Psoas muscle (tissue), 8 donors: ENCODE measurements at regions of chr2 and their contacts with region 1.

Region 1: GRCh38 chr2:134118279-134119116 is 135.4 kb upstream of the MGAT5 start:
- DNase-seq: peak; percentile 79 to 87
- ATAC-seq: peak; percentile 74 to 85 (median 81)
- H3K4me3 ChIP-seq: no peak overlapping the region
- H3K27ac ChIP-seq: no peak overlapping the region
- H3K4me1 ChIP-seq: peaks cover 17% of the 10 kb centered on the region
- H3K27me3 ChIP-seq: peaks cover 0 to 2% (median 0%) of the 10 kb centered on the region in 3 donors
- CTCF ChIP-seq: peak; percentile 83

Region 2: GRCh38 chr2:133886735-133887660 is 231.5 kb before region 1 on chr2:
- intact Hi-C with region 1: loop called in 1 of 2 experiments (anchors 5 kb)
- DNase-seq: peak; percentile 49 to 67
- ATAC-seq: peak; percentile 53 to 67 (median 58)
- H3K4me3 ChIP-seq: no peak overlapping the region
- H3K27ac ChIP-seq: no peak overlapping the region
- H3K4me1 ChIP-seq: no peaks in the 10 kb centered on the region
- H3K27me3 ChIP-seq: peaks cover 0 to 4% (median 0%) of the 10 kb centered on the region in 3 donors
- CTCF ChIP-seq: peak; percentile 60

Region 3: DNA sequence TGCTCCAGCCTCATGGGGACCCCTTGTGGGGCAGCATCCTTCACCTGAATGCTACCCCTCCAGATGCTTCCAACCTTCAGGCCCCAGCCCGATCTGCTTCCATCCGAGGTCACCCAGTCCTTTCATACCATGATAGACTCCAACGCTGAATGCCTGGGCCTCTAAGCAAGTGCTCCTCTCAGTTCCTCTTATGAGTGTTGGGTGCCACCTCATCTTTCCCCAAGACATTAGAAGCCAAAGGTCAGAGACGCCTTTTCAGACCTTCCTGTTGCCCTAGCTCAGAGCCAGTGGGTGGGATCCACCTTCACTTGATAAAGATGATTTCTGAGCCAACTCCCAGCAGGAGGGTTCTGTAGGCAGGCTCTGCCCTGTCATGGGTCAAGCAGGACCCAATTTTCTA is 39.1 kb before region 1 on chr2:
- intact Hi-C with region 1: no loop called
- DNase-seq: no peak
- ATAC-seq: no peak
- H3K4me3 ChIP-seq: no peak overlapping the region
- H3K27ac ChIP-seq: no peak overlapping the region
- H3K4me1 ChIP-seq: no peaks in the 10 kb centered on the region
- H3K27me3 ChIP-seq: no peaks in the 10 kb centered on the region
- CTCF ChIP-seq: no peak

Region 4: GRCh38 chr2:134178241-134178877 is 59.9 kb after region 1 on chr2:
- intact Hi-C with region 1: loop called in 1 of 2 experiments (anchors 10 kb)
- DNase-seq: no peak
- ATAC-seq: no peak
- H3K4me3 ChIP-seq: no peak overlapping the region
- H3K27ac ChIP-seq: no peak overlapping the region
- H3K4me1 ChIP-seq: peaks cover 15% of the 10 kb centered on the region
- H3K27me3 ChIP-seq: peaks cover 0 to 4% (median 0%) of the 10 kb centered on the region in 3 donors
- CTCF ChIP-seq: no peak

Region 5: GRCh38 chr2:134207564-134208209 is 89.2 kb after region 1 on chr2:
- intact Hi-C with region 1: loop called in 1 of 2 experiments (anchors 5 kb)
- DNase-seq: peak; percentile 37 to 61
- ATAC-seq: peak in 3 of 4 donors; percentile 63 to 72 (median 65)
- H3K4me3 ChIP-seq: no peak overlapping the region
- H3K27ac ChIP-seq: no peak overlapping the region
- H3K4me1 ChIP-seq: peaks cover 4% of the 10 kb centered on the region
- H3K27me3 ChIP-seq: no peaks in the 10 kb centered on the region
- CTCF ChIP-seq: peak; percentile 54

Region 6: GRCh38 chr2:134245340-134245984 is 127.0 kb after region 1 on chr2:
- intact Hi-C with region 1: loop called (anchors 2 kb)
- DNase-seq: peak; percentile 69 to 74
- ATAC-seq: peak in 3 of 4 donors; percentile 27 to 72 (median 52)
- H3K4me3 ChIP-seq: no peak overlapping the region
- H3K27ac ChIP-seq: no peak overlapping the region
- H3K4me1 ChIP-seq: no peaks in the 10 kb centered on the region
- H3K27me3 ChIP-seq: peaks cover 0 to 3% (median 0%) of the 10 kb centered on the region in 3 donors
- CTCF ChIP-seq: peak; percentile 79

Region 7: DNA sequence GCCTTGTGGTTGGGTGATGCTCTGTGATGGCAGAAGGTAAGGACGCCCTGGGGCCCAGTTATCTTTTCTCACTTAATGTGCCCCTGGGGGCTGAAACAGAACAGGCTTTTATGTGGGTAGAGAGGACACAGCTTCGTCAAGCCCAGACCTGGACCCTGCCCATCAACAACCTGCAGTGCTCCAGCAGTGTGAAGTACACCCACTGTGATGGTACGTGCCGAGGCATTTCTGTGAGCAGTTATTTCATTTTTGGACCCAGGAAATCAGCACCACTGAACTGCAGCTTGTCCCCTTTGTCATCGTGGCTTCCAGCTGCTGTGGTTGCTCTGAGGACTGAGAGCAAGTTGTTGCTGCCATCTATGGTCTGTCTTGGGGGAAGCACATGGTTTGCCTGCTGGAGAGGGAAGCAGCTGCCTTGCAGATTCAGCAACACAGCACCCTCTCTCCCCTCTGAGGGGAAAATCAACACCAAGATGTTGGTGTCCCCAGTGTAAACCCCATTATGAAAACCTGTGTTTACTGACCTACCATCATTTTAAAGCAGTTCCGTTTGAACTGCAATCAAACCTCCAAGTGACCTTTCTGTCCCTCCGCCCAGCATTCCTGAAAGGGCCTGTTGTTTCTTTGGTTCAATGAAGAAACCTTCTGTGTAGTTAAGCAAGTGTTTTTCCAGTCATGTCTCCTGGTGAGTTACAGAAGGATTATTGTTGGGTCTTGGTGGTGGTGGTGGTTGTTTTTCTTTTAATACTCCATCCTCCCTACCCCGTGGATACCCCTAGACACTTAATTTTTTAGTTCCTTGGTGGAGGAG is 293.5 kb after region 1 on chr2:
- intact Hi-C with region 1: loop called (anchors 1 to 2 kb)
- DNase-seq: peak; percentile 51 to 69
- ATAC-seq: peak; percentile 89 to 96 (median 92)
- H3K4me3 ChIP-seq: no peak overlapping the region
- H3K27ac ChIP-seq: no peak overlapping the region
- H3K4me1 ChIP-seq: no peaks in the 10 kb centered on the region
- H3K27me3 ChIP-seq: no peaks in the 10 kb centered on the region
- CTCF ChIP-seq: peak; percentile 70